Head of caudate nucleus (tissue), 42 donors: ENCODE measurements at regions of chr22 and their contacts with region 1.

Region 1: DNA sequence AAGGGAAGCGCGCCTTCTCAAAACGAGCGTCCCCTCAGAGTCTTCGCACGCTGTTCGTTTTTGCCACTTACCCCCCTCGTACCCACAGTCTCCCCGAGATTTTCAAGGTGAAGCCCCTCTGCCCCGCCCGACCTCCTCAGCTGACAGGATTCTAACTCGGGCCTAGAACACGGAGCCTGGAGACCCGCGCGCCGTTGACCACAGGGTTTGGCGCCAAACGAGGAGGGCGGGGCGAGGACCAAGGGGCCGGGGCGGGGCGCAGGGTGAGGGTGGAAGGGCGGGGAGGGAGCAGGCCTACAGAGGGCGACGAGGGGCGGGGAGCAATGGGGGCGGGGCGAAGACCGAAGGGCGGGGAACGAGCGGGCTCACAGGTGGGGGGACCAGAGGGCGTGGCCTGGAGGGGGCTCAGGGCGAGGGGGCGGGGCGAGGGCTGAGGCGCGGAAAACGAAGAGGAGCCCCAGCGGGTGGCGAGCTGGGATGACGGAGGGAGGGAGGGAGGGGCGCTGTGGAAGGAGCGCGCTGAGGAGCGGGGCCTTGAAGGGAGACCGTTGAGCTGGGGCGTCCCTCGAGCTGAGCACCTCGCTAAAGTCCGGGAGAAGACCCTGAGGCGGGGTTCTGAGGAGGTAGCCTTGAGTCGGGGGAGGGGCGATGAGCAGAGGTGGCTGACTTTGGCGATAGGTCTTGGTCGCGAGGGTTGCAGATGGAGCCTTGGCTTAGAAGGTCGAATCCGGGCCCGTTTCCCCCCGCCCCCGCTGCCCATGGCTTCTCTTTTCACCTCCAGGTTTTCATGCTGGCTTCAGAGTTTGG is at the start of gene DMC1:
- DNase-seq: peak; percentile 70 to 97 (median 90)

Region 2: GRCh38 chr22:38069372-38070249 is 500.6 kb before region 1 on chr22:
- intact Hi-C with region 1: loop called (anchors 10 kb)
- DNase-seq: peak; percentile 71 to 93 (median 84)

Region 3: DNA sequence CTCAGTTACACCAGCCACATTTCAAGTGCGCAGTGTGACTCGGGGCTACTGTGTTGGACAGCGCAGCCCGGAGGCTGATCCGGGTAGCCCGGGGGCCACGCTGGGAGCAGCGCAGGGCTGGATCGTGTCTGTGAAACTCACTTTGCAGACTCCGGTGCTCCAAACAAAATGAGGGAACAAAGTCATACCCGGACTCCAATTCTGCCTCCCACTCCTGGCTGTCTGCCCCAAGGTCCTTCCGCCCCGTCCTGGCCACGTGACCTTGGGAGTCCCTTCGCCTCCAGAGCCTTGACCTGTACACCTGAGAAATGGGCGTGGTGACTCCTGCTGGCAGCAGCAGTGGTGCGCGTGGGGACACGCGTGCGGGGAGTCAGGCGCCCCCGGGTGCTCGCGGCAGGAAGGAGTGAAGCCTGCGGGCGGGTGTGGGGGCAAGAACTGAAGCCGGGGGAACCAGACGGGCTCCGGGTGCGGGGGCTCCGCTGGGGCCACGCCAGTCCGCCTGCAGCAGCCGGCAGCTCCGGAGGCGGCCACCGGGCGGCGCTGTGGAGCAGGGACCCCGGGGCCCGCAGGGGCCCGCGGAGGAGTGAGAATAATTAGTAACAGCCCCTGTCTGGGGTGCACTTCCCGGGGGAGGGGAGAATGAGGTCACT is 157.6 kb before region 1 on chr22:
- intact Hi-C with region 1: loop called (anchors 5 kb)
- DNase-seq: peak in 24 of 42 donors; percentile 8 to 72 (median 38)